ENCODE measurements at regions of chr7 and their contacts with region 1.

Region 1: GRCh38 chr7:31443457-31443856 is 70.4 kb upstream of the ITPRID1 start:
- DNase-seq: peak; percentile 57
- H3K4me3 Mint-ChIP-seq: no peak overlapping the region
- H3K27ac Mint-ChIP-seq: no peak overlapping the region
- H3K4me1 Mint-ChIP-seq: no peaks in the 10 kb centered on the region
- H3K27me3 Mint-ChIP-seq: peaks cover 28% of the 10 kb centered on the region
- CTCF ChIP-seq: peak; percentile 72

Region 2: GRCh38 chr7:31373337-31374289 is 69.8 kb before region 1 on chr7:
- CTCF ChIA-PET with region 1: interaction called, 71 read pairs
- POLR2A ChIA-PET with region 1: no interaction called
- intact Hi-C with region 1: loop called (anchors 1 kb)
- DNase-seq: peak; percentile 62
- H3K4me3 Mint-ChIP-seq: no peak overlapping the region
- H3K27ac Mint-ChIP-seq: no peak overlapping the region
- H3K4me1 Mint-ChIP-seq: no peaks in the 10 kb centered on the region
- H3K27me3 Mint-ChIP-seq: peaks cover 19% of the 10 kb centered on the region
- CTCF ChIP-seq: peak; percentile 82

Region 3: DNA sequence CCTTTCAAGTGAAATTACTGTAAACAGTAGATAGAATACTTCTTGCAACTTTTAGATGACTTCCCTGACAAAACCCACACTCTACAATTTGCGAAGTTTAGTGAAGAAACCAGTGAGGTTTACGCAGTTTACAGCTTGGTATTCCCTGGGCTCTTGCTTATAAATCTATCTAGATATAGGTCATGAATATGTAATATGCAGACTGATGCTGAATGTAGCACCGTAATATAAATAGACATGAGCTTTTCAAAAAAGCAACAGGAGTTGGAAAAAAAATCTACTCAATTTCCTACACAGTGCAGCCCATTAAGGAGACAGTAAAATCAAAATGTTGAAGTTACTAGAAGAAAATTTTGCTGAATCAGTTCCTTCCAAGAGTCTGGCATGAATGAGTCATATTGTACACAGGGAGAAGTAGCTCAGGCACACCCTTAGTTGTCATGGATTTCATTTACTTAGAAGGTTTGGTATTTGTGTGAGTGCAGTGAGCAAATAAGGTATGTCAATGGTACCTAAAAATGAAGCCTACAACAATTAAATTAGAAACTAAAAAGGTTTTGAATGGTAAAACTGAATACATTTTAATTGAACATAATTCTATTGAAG is 35.2 kb before region 1 on chr7:
- CTCF ChIA-PET with region 1: interaction called, 10 read pairs
- POLR2A ChIA-PET with region 1: no interaction called
- intact Hi-C with region 1: no loop called
- DNase-seq: peak; percentile 60
- H3K4me3 Mint-ChIP-seq: no peak overlapping the region
- H3K27ac Mint-ChIP-seq: peak overlapping the region; percentile 77
- H3K4me1 Mint-ChIP-seq: peaks cover 7% of the 10 kb centered on the region
- H3K27me3 Mint-ChIP-seq: no peaks in the 10 kb centered on the region
- CTCF ChIP-seq: no peak

Region 4: GRCh38 chr7:31456646-31457368 is 13.3 kb after region 1 on chr7:
- CTCF ChIA-PET with region 1: interaction called, 23 read pairs
- POLR2A ChIA-PET with region 1: no interaction called
- intact Hi-C with region 1: no loop called
- DNase-seq: no peak
- H3K4me3 Mint-ChIP-seq: no peak overlapping the region
- H3K27ac Mint-ChIP-seq: no peak overlapping the region
- H3K4me1 Mint-ChIP-seq: no peaks in the 10 kb centered on the region
- H3K27me3 Mint-ChIP-seq: no peaks in the 10 kb centered on the region
- CTCF ChIP-seq: no peak

Region 5: DNA sequence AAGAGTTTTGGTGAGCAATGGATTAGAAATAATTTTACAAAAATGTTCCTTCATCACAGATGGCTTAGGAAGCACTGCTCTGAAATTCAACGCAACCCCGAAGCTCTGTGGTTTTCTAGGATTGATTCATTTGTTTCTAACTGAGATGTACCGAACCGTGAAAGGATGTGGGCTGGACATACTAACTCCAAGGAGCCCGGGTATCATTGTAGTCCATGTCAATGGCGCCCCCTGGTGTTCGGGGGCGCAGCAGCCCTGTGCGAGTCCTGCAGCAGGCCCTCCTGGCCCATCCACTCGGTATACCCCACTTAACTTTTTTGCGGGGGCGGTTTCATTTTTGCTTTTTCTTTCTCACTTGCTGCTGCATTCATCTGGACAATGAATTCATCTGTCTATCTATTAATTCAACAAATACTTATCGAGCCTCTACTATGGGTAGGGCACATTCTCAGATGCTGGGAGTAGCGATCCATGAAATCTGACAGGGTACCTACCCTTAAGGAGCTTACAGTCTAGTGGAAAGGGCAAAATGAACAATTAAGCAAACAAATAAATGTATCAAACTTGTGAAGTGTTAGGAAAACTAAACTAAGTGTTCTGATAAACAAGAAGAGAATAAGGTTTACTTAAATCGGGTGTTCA is 45.2 kb after region 1 on chr7:
- CTCF ChIA-PET with region 1: interaction called, 11 read pairs
- POLR2A ChIA-PET with region 1: no interaction called
- intact Hi-C with region 1: loop called (anchors 1 kb)
- DNase-seq: peak; percentile 65
- H3K4me3 Mint-ChIP-seq: no peak overlapping the region
- H3K27ac Mint-ChIP-seq: no peak overlapping the region
- H3K4me1 Mint-ChIP-seq: no peaks in the 10 kb centered on the region
- H3K27me3 Mint-ChIP-seq: no peaks in the 10 kb centered on the region
- CTCF ChIP-seq: peak; percentile 77

Region 6: GRCh38 chr7:31500656-31501055 is 57.2 kb after region 1 on chr7:
- CTCF ChIA-PET with region 1: no interaction called
- POLR2A ChIA-PET with region 1: no interaction called
- intact Hi-C with region 1: no loop called
- DNase-seq: no peak
- H3K4me3 Mint-ChIP-seq: no peak overlapping the region
- H3K27ac Mint-ChIP-seq: no peak overlapping the region
- H3K4me1 Mint-ChIP-seq: no peaks in the 10 kb centered on the region
- H3K27me3 Mint-ChIP-seq: no peaks in the 10 kb centered on the region
- CTCF ChIP-seq: no peak

Region 7: GRCh38 chr7:31735991-31736982 is 292.8 kb after region 1 on chr7:
- CTCF ChIA-PET with region 1: interaction called, 9 read pairs
- POLR2A ChIA-PET with region 1: no interaction called
- intact Hi-C with region 1: loop called (anchors 1 kb)
- DNase-seq: peak; percentile 81
- H3K4me3 Mint-ChIP-seq: no peak overlapping the region
- H3K27ac Mint-ChIP-seq: no peak overlapping the region
- H3K4me1 Mint-ChIP-seq: peaks cover 6% of the 10 kb centered on the region
- H3K27me3 Mint-ChIP-seq: peaks cover 24% of the 10 kb centered on the region
- CTCF ChIP-seq: peak; percentile 86